GM12878 (cell line): ENCODE measurements at regions of chr5 and their contacts with region 1.

Region 1: GRCh38 chr5:150122158-150122510 is 33.5 kb downstream of the PDGFRB start:
- DNase-seq: no peak
- ATAC-seq: peak; percentile 95
- H3K4me3 ChIP-seq: no peak overlapping the region
- H3K27ac ChIP-seq: no peak overlapping the region
- H3K4me1 ChIP-seq: no peaks in the 10 kb centered on the region
- H3K27me3 ChIP-seq: no peaks in the 10 kb centered on the region
- CTCF ChIP-seq: peak; percentile 60 to 67 (median 63)
- EP300 ChIP-seq: no peak
- POLR2A ChIP-seq: no peak
- RAD21 ChIP-seq: peak; percentile 60

Region 2: GRCh38 chr5:149902177-149902576 is 220.0 kb before region 1 on chr5:
- CTCF ChIA-PET with region 1: no interaction called
- POLR2A ChIA-PET with region 1: no interaction called
- RAD21 ChIA-PET with region 1: no interaction called
- SMC1A ChIA-PET with region 1: no interaction called
- in situ Hi-C with region 1: no loop called
- intact Hi-C with region 1: no loop called
- DNase-seq: no peak
- ATAC-seq: no peak
- H3K4me3 ChIP-seq: no peak overlapping the region
- H3K27ac ChIP-seq: no peak overlapping the region
- H3K4me1 ChIP-seq: no peaks in the 10 kb centered on the region
- H3K27me3 ChIP-seq: peaks cover 0 to under 1% of the 10 kb centered on the region in 2 experiments; a peak in 1 of 4 replicates
- CTCF ChIP-seq: no peak
- EP300 ChIP-seq: no peak
- POLR2A ChIP-seq: no peak
- RAD21 ChIP-seq: no peak

Region 3: GRCh38 chr5:150036513-150036912 is 85.6 kb before region 1 on chr5:
- CTCF ChIA-PET with region 1: interaction called, 17 read pairs
- POLR2A ChIA-PET with region 1: no interaction called
- RAD21 ChIA-PET with region 1: interaction called, 3 read pairs
- SMC1A ChIA-PET with region 1: no interaction called
- in situ Hi-C with region 1: no loop called
- intact Hi-C with region 1: no loop called
- DNase-seq: no peak
- ATAC-seq: no peak
- H3K4me3 ChIP-seq: no peak overlapping the region
- H3K27ac ChIP-seq: no peak overlapping the region
- H3K4me1 ChIP-seq: peaks cover 7% of the 10 kb centered on the region
- H3K27me3 ChIP-seq: no peaks in the 10 kb centered on the region
- CTCF ChIP-seq: no peak
- EP300 ChIP-seq: no peak
- POLR2A ChIP-seq: no peak
- RAD21 ChIP-seq: no peak

Region 4: DNA sequence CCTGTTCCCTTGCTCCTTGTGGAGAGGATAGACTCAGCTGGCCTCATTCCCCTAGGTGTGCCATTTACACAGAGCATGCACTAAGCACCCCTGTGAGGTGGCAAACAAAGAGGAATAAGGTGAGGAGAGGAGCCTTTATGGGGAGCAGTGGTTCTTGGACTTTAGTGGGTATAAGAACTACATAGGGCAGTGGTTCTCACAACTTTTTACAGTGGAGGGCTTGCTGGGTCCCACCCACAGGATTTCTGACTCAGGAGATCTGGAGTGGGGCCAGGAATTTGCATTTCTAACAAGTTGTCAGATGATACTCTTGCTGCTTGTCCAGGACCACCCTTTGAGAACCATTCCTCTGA is 77.8 kb before region 1 on chr5:
- CTCF ChIA-PET with region 1: interaction called, 10 read pairs
- POLR2A ChIA-PET with region 1: no interaction called
- RAD21 ChIA-PET with region 1: no interaction called
- SMC1A ChIA-PET with region 1: interaction called, 3 read pairs
- in situ Hi-C with region 1: no loop called
- intact Hi-C with region 1: no loop called
- DNase-seq: no peak
- ATAC-seq: no peak
- H3K4me3 ChIP-seq: no peak overlapping the region
- H3K27ac ChIP-seq: no peak overlapping the region
- H3K4me1 ChIP-seq: no peaks in the 10 kb centered on the region
- H3K27me3 ChIP-seq: no peaks in the 10 kb centered on the region
- CTCF ChIP-seq: no peak
- EP300 ChIP-seq: no peak
- POLR2A ChIP-seq: no peak
- RAD21 ChIP-seq: no peak

Region 5: DNA sequence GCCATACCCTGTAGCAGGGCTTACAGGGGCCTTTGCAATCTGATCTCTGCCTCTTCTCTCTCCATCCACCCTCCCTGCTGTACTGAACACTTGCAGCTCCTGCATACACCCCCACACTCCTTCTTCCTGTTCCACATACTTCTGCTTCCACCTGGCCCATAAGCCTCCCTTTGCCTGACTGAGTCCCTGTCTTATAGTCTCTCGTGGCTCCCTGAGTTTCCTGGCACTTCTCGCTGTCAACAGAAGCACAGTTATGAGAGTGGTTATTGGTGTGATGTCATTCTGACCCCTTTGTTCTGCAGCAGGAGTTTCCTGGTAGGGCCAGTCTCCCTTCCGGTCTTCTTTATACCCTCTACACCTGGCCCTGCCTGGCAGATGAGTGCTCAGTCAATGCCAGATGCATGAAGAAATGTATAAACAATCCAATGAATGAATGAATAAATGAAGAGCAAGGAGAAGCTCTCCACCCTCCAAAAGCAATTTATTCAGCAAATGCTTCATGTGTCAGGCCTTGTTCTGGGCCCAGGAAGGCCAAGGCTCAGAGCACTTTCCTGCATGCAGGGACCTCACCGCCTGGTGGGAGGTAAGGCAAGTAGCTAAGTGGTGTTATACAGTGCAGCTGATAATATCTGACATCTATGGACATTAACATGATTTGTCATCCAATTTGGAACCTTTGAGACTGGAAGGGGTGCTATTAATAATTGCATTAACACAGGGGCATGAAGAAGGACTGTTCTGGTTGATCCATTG is 15.3 kb before region 1 on chr5:
- CTCF ChIA-PET with region 1: interaction called, 15 read pairs
- POLR2A ChIA-PET with region 1: no interaction called
- RAD21 ChIA-PET with region 1: no interaction called
- SMC1A ChIA-PET with region 1: interaction called, 6 read pairs
- in situ Hi-C with region 1: no loop called
- intact Hi-C with region 1: no loop called
- DNase-seq: no peak
- ATAC-seq: peak; percentile 34; the same call in 2 of the 3 replicates
- H3K4me3 ChIP-seq: no peak overlapping the region
- H3K27ac ChIP-seq: no peak overlapping the region
- H3K4me1 ChIP-seq: peaks cover 14% of the 10 kb centered on the region
- H3K27me3 ChIP-seq: no peaks in the 10 kb centered on the region
- CTCF ChIP-seq: no peak
- EP300 ChIP-seq: no peak
- POLR2A ChIP-seq: no peak
- RAD21 ChIP-seq: no peak

Region 6: DNA sequence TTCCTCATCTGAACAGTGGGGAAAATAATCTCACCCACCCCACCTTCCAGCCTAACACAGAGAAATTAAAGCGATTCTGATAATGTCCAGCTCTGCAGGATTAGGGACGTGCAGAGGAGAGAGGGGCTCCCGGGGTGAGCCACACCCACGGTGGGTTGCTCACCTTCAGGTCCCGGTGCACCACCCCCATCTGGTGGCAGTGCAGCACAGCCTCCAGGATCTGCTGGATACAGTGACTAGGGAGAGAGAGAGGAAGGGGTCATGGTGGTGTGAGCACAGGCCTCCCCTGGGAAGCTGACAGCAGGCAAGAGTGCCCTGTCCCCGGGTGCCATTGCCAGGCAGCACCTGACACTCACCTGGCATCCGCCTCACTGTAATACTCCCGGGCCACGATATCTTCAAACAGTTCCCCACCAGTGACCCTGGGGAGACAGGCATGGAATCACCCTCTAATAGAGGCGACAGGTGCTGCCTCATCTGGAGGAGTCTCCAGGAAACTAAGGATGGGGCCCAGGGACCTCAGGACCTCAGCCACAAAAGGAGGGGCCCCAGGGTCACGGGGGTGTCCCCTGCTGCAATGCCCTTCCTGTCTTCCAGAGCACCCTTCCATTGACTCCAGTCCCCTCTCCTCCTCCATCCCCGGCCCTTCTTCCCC is 134.4 kb after region 1 on chr5:
- CTCF ChIA-PET with region 1: no interaction called
- POLR2A ChIA-PET with region 1: no interaction called
- RAD21 ChIA-PET with region 1: no interaction called
- SMC1A ChIA-PET with region 1: no interaction called
- in situ Hi-C with region 1: no loop called
- intact Hi-C with region 1: no loop called
- DNase-seq: no peak
- ATAC-seq: peak; percentile 18; the same call in 1 of the 3 replicates
- H3K4me3 ChIP-seq: no peak overlapping the region
- H3K27ac ChIP-seq: no peak overlapping the region
- H3K4me1 ChIP-seq: no peaks in the 10 kb centered on the region
- H3K27me3 ChIP-seq: peaks cover 2% of the 10 kb centered on the region in 2 experiments; a peak in 3 of 4 replicates
- CTCF ChIP-seq: no peak
- EP300 ChIP-seq: no peak
- POLR2A ChIP-seq: no peak
- RAD21 ChIP-seq: no peak